ENCODE measurements at regions of chr5 and their contacts with region 1.

Region 1: DNA sequence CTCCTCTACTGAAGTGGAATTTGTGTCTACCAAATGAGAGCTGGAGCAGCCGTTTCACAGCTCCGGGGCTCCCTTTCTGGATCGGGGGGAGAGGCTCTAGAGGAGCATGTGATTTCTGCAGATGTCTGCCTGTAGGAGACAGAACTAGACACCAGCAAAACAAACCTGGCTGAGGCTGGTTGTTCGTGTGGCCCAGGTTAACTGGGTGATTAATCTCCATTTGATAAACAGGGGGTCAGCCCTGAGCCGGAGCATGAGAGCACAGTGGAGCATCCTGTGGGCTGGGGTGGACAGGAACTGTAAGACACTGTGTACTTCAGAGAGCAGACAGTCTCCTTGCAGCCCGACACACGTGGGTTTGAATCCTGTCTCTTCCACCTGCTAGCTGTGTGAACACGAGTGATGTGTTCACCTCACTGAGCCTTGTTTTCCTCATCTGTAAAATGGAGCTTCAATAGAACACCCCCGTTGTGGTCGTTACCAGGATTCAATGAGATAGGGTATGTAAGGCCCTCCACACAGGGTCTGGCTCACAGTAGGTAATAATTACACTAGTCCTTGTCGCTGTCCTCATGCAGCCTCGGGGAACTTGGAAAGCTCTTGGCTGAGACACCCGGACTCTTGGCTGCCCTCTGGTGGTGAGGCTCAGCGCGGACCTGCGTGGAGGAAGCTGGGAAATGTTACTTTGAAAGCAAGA is 12.9 kb downstream of the CXCL14 start:
- DNase-seq: peak; percentile 54
- H3K4me3 ChIP-seq: no peak overlapping the region
- H3K27ac ChIP-seq: no peak overlapping the region
- H3K4me1 ChIP-seq: no peaks in the 10 kb centered on the region
- H3K27me3 ChIP-seq: peaks cover 8 to 10% of the 10 kb centered on the region in 2 experiments
- CTCF ChIP-seq: peak; percentile 90 to 93
- POLR2A ChIP-seq: no peak

Region 2: GRCh38 chr5:135457424-135458071 is 108.3 kb before region 1 on chr5:
- CTCF ChIA-PET with region 1: interaction called, 664 read pairs
- POLR2A ChIA-PET with region 1: no interaction called
- dilution Hi-C with region 1: loop called (anchors 25 kb)
- intact Hi-C with region 1: loop called (anchors 1 kb)
- DNase-seq: peak; percentile 50
- H3K4me3 ChIP-seq: no peak overlapping the region
- H3K27ac ChIP-seq: no peak overlapping the region
- H3K4me1 ChIP-seq: no peaks in the 10 kb centered on the region
- H3K27me3 ChIP-seq: peaks cover 17 to 22% of the 10 kb centered on the region in 2 experiments
- CTCF ChIP-seq: peak; percentile 90 to 91
- POLR2A ChIP-seq: no peak

Region 3: DNA sequence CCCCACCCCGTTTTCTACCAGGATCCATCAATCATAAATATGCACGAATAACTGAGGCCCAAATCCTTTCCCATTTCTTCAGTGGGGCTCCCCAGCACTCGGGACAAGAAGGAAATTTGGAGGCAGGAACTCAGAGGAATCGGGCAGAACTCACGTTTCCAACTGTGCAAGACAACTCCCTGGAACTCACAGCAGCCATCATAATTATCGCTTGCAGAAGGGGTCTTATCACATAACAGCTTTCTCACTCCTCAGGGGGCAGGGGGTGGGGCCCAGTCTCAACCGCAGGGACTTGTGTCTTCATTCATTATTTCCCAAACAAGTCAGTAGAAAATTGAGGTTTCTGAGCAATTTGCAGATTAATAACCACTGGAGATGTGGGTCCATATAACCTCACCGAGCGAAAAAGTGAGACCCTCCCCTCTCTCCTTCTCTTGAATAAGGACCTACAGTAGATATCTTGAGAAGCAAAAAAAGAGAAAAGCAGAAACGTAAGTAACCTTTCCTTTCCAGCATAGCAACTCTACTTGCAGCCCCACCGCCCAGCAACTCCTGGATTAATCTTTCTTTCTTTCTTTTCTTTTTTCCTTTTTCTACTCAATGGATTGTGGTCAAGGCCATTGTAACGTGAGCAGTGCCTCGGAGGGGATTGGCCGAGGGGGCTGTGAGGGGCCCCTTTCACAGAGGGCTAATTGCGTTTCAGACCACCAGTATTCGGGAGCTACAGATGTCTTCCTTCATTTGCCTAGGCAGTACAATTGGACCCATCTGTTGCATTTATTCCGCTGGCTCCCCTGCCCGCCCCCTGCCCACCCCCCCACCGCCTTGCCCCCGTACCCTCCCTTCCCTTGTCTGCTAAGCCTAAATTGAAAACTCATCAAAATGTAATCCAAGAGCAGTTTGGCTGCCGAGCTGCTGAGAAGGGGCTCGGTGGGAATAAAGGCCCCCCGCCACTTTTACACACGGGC is 89.0 kb before region 1 on chr5:
- CTCF ChIA-PET with region 1: interaction called, 664 read pairs
- POLR2A ChIA-PET with region 1: no interaction called
- dilution Hi-C with region 1: loop called (anchors 25 kb)
- intact Hi-C with region 1: no loop called
- DNase-seq: no peak
- H3K4me3 ChIP-seq: no peak overlapping the region
- H3K27ac ChIP-seq: no peak overlapping the region
- H3K4me1 ChIP-seq: no peaks in the 10 kb centered on the region
- H3K27me3 ChIP-seq: peaks cover 28 to 40% of the 10 kb centered on the region in 2 experiments
- CTCF ChIP-seq: no peak
- POLR2A ChIP-seq: no peak

Region 4: GRCh38 chr5:135543485-135544304 is 22.2 kb before region 1 on chr5:
- CTCF ChIA-PET with region 1: interaction called, 149 read pairs
- POLR2A ChIA-PET with region 1: no interaction called
- dilution Hi-C with region 1: no loop called
- intact Hi-C with region 1: no loop called
- DNase-seq: no peak
- H3K4me3 ChIP-seq: peak overlapping the region in 1 of 3 experiments; percentile 4
- H3K27ac ChIP-seq: no peak overlapping the region
- H3K4me1 ChIP-seq: peaks cover 6% of the 10 kb centered on the region
- H3K27me3 ChIP-seq: peaks cover 86 to 96% of the 10 kb centered on the region in 2 experiments
- CTCF ChIP-seq: no peak
- POLR2A ChIP-seq: no peak

Region 5: DNA sequence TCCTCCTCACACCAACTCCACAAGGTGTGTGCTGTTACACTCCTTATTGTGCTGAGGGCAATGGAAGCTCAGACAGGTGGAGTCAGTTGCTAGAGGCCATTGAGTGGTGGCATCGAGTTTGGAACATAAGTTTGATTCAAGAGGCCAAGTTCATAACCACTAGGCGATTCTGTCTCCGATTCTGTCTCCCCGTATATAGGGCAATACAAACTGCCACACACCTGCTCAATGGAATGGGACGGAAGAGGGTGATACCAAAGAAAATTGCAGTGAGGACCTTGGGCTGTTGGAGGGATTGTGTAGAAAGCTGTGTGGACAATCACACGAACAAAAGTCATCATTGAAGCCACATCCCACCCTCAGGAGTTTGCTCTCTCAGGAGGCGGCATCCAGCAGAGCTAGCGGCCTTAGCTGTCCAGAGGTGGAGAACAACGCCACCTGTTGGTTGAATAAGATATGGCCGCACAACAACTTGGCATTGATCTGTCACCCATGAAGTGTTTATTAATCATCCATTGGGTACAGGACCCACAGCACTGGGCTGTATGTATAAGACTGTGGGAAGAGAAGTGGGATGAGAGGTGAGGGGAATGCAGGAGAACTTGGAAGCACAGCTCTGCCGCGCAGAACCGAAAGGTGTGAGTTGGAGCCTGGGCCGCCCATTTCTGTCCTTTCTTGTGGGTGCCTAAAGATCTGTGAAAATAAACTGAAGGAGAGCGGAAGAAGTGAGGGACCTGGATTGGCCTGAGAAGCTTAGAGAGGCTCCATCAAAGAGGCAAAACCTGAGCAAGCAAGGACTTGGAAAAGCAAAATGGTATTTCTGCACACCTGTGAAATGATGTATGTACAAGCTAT is 14.1 kb before region 1 on chr5:
- CTCF ChIA-PET with region 1: interaction called, 149 read pairs
- POLR2A ChIA-PET with region 1: no interaction called
- dilution Hi-C with region 1: no loop called
- intact Hi-C with region 1: no loop called
- DNase-seq: peak; percentile 71
- H3K4me3 ChIP-seq: no peak overlapping the region
- H3K27ac ChIP-seq: no peak overlapping the region
- H3K4me1 ChIP-seq: no peaks in the 10 kb centered on the region
- H3K27me3 ChIP-seq: peaks cover 34 to 46% of the 10 kb centered on the region in 2 experiments
- CTCF ChIP-seq: peak; percentile 74 to 83
- POLR2A ChIP-seq: no peak

Region 6: DNA sequence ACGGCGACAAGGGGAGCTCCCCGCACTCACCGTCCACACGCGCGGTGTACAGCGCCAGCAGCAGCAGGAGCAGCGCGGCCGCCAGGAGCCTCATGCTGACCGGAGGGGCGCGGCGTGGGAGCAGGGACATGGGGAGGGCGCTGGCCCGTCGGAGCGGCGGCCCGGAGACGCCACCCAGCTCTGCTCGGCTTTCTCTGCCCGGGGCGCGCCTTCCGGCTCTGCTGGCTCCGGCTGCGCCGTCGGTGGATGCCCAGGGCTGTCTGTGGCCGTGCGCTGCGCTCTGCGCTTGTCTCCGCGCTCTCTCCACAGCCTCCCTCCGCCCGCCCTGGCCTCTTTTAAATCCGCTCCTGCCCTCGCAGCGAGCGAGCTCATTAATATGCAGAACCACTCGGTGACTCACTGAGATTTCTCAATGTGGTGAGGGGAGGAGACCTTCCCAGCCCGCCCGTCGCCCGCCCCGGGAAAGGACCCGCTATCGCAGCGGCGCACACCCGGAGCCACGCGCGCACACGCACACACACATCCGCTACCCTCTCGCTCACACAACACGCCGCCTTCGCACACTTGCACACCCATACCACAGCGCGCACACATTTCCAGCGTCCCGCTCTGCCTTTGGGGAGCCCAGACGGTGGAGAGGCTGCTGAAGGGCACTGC is 12.9 kb after region 1 on chr5 and contains the start of gene CXCL14:
- CTCF ChIA-PET with region 1: interaction called, 44 read pairs
- POLR2A ChIA-PET with region 1: no interaction called
- dilution Hi-C with region 1: no loop called
- intact Hi-C with region 1: no loop called
- DNase-seq: no peak
- H3K4me3 ChIP-seq: no peak within 1 kb of the TSS
- H3K27ac ChIP-seq: no peak within 1 kb of the TSS
- H3K4me1 ChIP-seq: no peaks in the 10 kb centered on the region
- H3K27me3 ChIP-seq: peaks cover 34 to 40% of the 10 kb centered on the region in 2 experiments
- CTCF ChIP-seq: no peak
- POLR2A ChIP-seq: no peak
- total RNA-seq, gene CXCL14: not detected in 2 replicates

Region 7: DNA sequence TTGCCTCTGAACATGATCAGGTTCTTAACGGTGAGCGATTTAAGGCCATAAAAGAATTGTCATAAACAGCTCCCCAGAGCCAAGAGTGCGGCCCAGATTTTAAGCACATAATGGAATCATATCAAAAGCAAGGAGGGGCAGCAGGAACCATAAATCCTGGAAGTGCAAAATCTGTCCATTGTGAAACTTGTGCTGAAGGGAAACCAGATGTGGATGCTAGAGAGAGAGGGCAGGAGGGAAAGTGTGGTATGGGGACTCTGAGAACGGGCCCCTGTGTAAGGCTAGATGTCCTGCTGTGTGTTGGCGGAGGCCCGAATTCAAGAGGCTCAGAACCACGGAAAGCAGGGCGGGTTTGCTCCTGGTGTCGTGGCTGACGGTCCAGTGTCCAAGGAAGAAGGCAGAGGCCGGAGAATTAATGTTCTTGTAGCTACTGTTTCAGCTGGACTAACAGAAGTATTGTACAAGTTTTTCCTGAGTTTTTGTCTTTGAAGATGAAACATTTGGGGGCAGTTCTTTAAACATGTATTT is 21.9 kb after region 1 on chr5:
- CTCF ChIA-PET with region 1: interaction called, 13 read pairs
- POLR2A ChIA-PET with region 1: no interaction called
- dilution Hi-C with region 1: no loop called
- intact Hi-C with region 1: no loop called
- DNase-seq: no peak
- H3K4me3 ChIP-seq: no peak overlapping the region
- H3K27ac ChIP-seq: no peak overlapping the region
- H3K4me1 ChIP-seq: no peaks in the 10 kb centered on the region
- H3K27me3 ChIP-seq: no peaks in the 10 kb centered on the region
- CTCF ChIP-seq: no peak
- POLR2A ChIP-seq: no peak

Region 8: GRCh38 chr5:136374003-136374402 is 808.1 kb after region 1 on chr5:
- CTCF ChIA-PET with region 1: no interaction called
- POLR2A ChIA-PET with region 1: no interaction called
- dilution Hi-C with region 1: no loop called
- intact Hi-C with region 1: no loop called
- DNase-seq: peak; percentile 72
- H3K4me3 ChIP-seq: no peak overlapping the region
- H3K27ac ChIP-seq: no peak overlapping the region
- H3K4me1 ChIP-seq: peaks cover 3% of the 10 kb centered on the region
- H3K27me3 ChIP-seq: peaks cover 0 to 12% of the 10 kb centered on the region in 2 experiments
- CTCF ChIP-seq: peak; percentile 51 to 58
- POLR2A ChIP-seq: no peak

Measured in endothelial cell of umbilical vein (primary cell).